ENCODE measurements at regions of chr16 and their contacts with region 1.

Region 1: DNA sequence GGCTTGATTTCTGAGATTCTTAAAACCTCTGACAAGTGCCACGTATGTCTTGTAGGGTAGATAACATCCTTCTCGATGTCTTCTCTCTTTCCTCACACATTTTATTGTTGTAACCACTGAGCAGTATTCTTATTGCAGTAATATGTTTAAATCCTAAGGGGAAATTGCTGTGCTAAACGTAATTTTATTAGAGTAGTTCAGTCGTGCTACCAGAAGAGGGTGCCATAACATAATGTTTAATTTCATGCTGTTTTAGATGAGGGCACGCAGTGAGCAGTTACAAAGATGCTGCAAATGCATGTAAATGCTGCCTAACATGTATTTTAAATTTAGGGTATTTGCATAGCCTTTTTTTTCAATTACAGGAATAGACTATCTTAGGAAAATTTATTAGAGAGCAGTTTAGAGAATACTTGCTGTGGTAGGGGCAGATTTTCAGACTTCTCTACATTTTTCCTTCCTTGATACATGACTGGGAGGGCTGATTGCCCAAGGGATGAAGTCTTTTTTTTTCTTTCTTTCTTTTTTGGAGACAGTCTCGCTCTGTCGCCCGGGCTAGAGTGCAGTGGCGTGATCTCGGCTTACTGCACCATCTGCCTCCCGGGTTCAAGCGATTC is 51.7 kb downstream of the GAN start:
- DNase-seq: peak; percentile 59
- ATAC-seq: peak; percentile 89
- H3K4me3 ChIP-seq: no peak overlapping the region
- H3K27ac ChIP-seq: no peak overlapping the region
- H3K4me1 ChIP-seq: no peaks in the 10 kb centered on the region
- H3K27me3 ChIP-seq: no peaks in the 10 kb centered on the region
- CTCF ChIP-seq: peak; percentile 83
- POLR2A ChIP-seq: no peak
- RAD21 ChIP-seq: peak; percentile 82

Region 2: GRCh38 chr16:81723098-81723723 is 356.8 kb after region 1 on chr16:
- CTCF ChIA-PET with region 1: no interaction called
- POLR2A ChIA-PET with region 1: no interaction called
- dilution Hi-C with region 1: no loop called
- in situ Hi-C with region 1: no loop called
- intact Hi-C with region 1: loop called (anchors 1 kb)
- DNase-seq: peak; percentile 80
- ATAC-seq: peak; percentile 85
- H3K4me3 ChIP-seq: no peak overlapping the region
- H3K27ac ChIP-seq: no peak overlapping the region
- H3K4me1 ChIP-seq: peaks cover 7% of the 10 kb centered on the region
- H3K27me3 ChIP-seq: peaks cover 36% of the 10 kb centered on the region
- CTCF ChIP-seq: peak; percentile 79
- POLR2A ChIP-seq: no peak
- RAD21 ChIP-seq: peak; percentile 92

Region 3: DNA sequence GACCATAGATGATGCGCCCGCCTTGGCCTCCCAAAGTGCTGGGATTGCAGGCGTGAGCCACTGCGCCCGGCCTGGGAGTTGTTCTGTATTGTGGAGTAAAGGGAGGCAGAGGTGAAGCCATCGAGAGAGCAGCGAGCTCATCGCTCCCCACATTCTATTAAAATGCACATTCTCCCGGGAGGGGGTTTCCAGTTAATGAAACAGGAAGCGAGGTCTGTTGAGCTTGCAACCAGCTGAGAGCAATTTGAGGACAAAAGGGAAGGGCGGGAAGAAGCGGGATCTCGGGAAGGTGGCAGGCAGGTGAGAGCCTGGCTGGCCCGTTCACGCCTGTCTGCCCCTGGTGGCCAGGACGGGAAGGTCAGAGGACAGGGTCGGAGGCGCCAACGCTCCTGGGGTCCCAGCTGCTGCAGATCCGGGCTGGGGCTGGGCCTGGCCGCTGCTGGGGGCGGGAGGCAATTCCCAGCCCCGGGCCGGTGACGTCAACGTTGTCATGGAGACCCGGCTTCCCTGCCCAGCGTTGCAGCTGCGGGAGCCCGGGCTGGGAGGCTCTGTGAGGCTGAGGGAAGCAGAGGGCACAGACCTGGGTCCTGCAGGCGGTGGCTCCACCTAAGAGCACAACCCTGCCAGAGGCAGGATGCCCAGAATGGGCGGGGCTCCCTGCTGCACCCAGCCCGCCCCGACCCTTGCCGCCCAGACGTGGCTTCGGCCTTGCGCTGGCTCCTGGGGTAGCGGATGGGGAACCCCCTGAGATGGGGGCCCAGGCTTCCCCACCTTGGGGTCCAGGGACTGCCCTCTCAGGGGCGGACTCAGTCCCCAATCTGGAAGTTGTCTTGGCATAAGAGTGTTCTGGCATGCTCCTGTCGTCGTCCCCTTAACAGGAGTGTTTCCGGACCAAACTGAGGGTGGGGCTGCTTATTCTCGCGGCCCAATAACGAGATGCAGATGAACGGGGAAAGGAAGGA is 363.9 kb after region 1 on chr16:
- CTCF ChIA-PET with region 1: no interaction called
- POLR2A ChIA-PET with region 1: no interaction called
- dilution Hi-C with region 1: no loop called
- in situ Hi-C with region 1: loop called (anchors 5 kb)
- intact Hi-C with region 1: no loop called
- DNase-seq: peak; percentile 72
- ATAC-seq: peak; percentile 96
- H3K4me3 ChIP-seq: peak overlapping the region; percentile 34
- H3K27ac ChIP-seq: no peak overlapping the region
- H3K4me1 ChIP-seq: peaks cover 7% of the 10 kb centered on the region; the same call in 1 of the 2 replicates
- H3K27me3 ChIP-seq: peaks cover 10% of the 10 kb centered on the region
- CTCF ChIP-seq: peak; percentile 36
- POLR2A ChIP-seq: no peak
- RAD21 ChIP-seq: no peak

Region 4: GRCh38 chr16:81737885-81738786 is 371.7 kb after region 1 on chr16:
- CTCF ChIA-PET with region 1: no interaction called
- POLR2A ChIA-PET with region 1: no interaction called
- dilution Hi-C with region 1: no loop called
- in situ Hi-C with region 1: loop called (anchors 5 kb)
- intact Hi-C with region 1: loop called (anchors 1 kb)
- DNase-seq: peak; percentile 60
- ATAC-seq: peak; percentile 95
- H3K4me3 ChIP-seq: no peak overlapping the region
- H3K27ac ChIP-seq: no peak overlapping the region
- H3K4me1 ChIP-seq: no peaks in the 10 kb centered on the region
- H3K27me3 ChIP-seq: peaks cover 5% of the 10 kb centered on the region; the same call in 1 of the 2 replicates
- CTCF ChIP-seq: peak; percentile 87
- POLR2A ChIP-seq: no peak
- RAD21 ChIP-seq: peak; percentile 90

Region 5: GRCh38 chr16:81873843-81874752 is 507.7 kb after region 1 on chr16:
- CTCF ChIA-PET with region 1: no interaction called
- POLR2A ChIA-PET with region 1: no interaction called
- dilution Hi-C with region 1: no loop called
- in situ Hi-C with region 1: loop called (anchors 10 kb)
- intact Hi-C with region 1: no loop called
- DNase-seq: peak; percentile 24
- ATAC-seq: peak; percentile 91
- H3K4me3 ChIP-seq: no peak overlapping the region
- H3K27ac ChIP-seq: no peak overlapping the region
- H3K4me1 ChIP-seq: no peaks in the 10 kb centered on the region
- H3K27me3 ChIP-seq: peaks cover 5% of the 10 kb centered on the region
- CTCF ChIP-seq: peak; percentile 60
- POLR2A ChIP-seq: no peak
- RAD21 ChIP-seq: peak; percentile 21; the same call in 1 of the 2 replicates

Region 6: GRCh38 chr16:81885976-81886586 is 519.7 kb after region 1 on chr16:
- CTCF ChIA-PET with region 1: no interaction called
- POLR2A ChIA-PET with region 1: no interaction called
- dilution Hi-C with region 1: no loop called
- in situ Hi-C with region 1: no loop called
- intact Hi-C with region 1: loop called (anchors 5 kb)
- DNase-seq: peak; percentile 16
- ATAC-seq: peak; percentile 85
- H3K4me3 ChIP-seq: no peak overlapping the region
- H3K27ac ChIP-seq: no peak overlapping the region
- H3K4me1 ChIP-seq: no peaks in the 10 kb centered on the region; the same call in 1 of the 2 replicates
- H3K27me3 ChIP-seq: peaks cover 10% of the 10 kb centered on the region
- CTCF ChIP-seq: peak; percentile 52
- POLR2A ChIP-seq: no peak
- RAD21 ChIP-seq: peak; percentile 13; the same call in 1 of the 2 replicates

Measured in IMR-90 (cell line).